PC-3 (cell line): ENCODE measurements at regions of chr5 and their contacts with region 1.

Region 1: DNA sequence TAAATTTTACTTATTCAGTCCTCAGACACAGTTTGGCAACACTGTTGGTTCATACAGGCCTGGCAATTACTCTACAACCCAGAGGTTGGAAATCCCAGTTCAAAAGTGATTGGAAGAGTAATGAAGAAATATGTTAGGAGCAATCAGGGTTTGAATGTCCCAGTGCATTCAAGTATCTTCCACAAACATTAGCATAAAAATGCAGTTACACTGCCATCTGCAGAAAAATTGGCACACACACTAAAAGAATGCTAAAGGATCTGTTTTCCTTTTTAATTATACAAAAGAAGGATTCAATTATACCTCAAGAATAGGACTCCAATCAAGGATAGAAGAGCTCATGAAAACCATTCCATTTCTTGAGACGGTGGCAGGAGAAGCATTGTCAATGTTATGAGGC is 130.2 kb downstream of the DNAH5 start:
- DNase-seq: peak; percentile 75
- ATAC-seq: peak; percentile 70
- H3K4me3 ChIP-seq: no peak overlapping the region
- H3K27ac ChIP-seq: no peak overlapping the region
- H3K4me1 ChIP-seq: peaks cover 7% of the 10 kb centered on the region; the same call in 1 of the 2 replicates
- H3K27me3 ChIP-seq: no peaks in the 10 kb centered on the region
- CTCF ChIP-seq: peak; percentile 78

Region 2: DNA sequence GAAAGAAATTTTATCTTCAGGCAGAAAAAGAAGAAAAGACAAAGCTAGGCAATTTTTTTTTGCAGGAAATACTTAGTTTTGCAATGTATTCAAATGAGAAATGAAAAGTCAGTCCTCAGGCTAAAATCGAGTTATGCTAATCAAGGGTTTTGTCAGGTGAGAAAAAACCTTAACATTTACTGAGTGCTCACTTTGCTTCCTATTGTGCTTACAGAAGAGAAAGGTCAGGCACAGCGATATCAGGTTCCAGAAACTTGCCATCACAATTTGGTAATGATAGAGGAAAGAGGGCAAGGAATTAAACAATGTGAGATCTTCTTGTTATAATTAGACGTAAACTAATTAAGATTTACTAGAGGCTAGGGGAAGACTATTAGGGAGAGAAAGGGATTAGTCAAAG is 1478.4 kb before region 1 on chr5:
- CTCF ChIA-PET with region 1: interaction called, 11 read pairs
- POLR2A ChIA-PET with region 1: no interaction called
- intact Hi-C with region 1: no loop called
- DNase-seq: no peak
- ATAC-seq: no peak
- H3K4me3 ChIP-seq: no peak overlapping the region
- H3K27ac ChIP-seq: no peak overlapping the region
- H3K4me1 ChIP-seq: no peaks in the 10 kb centered on the region
- H3K27me3 ChIP-seq: no peaks in the 10 kb centered on the region
- CTCF ChIP-seq: no peak

Region 3: GRCh38 chr5:13606034-13606620 is 208.2 kb before region 1 on chr5:
- CTCF ChIA-PET with region 1: no interaction called
- POLR2A ChIA-PET with region 1: no interaction called
- intact Hi-C with region 1: loop called (anchors 5 kb)
- DNase-seq: peak; percentile 97
- ATAC-seq: peak; percentile 98
- H3K4me3 ChIP-seq: no peak overlapping the region
- H3K27ac ChIP-seq: peak overlapping the region; percentile 83
- H3K4me1 ChIP-seq: peaks cover 23% of the 10 kb centered on the region
- H3K27me3 ChIP-seq: no peaks in the 10 kb centered on the region
- CTCF ChIP-seq: no peak

Region 4: DNA sequence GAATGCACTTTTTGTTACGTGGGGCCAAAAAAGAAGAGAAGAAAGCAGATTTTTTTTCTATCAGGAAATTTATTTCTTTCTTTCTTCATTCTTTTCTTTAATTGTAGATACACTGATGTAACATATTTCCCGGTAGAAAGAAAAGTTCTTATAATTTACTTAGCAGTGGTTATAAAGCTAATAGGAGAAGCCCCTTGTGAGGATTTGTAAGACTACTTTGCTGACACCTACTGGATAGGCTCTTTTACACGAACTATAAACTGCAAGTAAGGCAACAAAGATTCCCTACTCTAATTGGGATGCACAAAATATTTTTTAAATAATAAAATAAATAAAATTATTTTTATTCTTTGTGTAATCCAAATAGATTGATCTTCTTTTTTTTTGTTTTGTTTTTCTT is 154.2 kb before region 1 on chr5:
- CTCF ChIA-PET with region 1: no interaction called
- POLR2A ChIA-PET with region 1: no interaction called
- intact Hi-C with region 1: loop called (anchors 2 kb)
- DNase-seq: peak; percentile 53
- ATAC-seq: no peak
- H3K4me3 ChIP-seq: no peak overlapping the region
- H3K27ac ChIP-seq: no peak overlapping the region
- H3K4me1 ChIP-seq: peaks cover 19% of the 10 kb centered on the region
- H3K27me3 ChIP-seq: no peaks in the 10 kb centered on the region
- CTCF ChIP-seq: peak; percentile 57

Region 5: GRCh38 chr5:13731121-13731628 is 83.1 kb before region 1 on chr5:
- CTCF ChIA-PET with region 1: no interaction called
- POLR2A ChIA-PET with region 1: no interaction called
- intact Hi-C with region 1: loop called (anchors 1 kb)
- DNase-seq: peak; percentile 97
- ATAC-seq: peak; percentile 98
- H3K4me3 ChIP-seq: no peak overlapping the region
- H3K27ac ChIP-seq: peak overlapping the region; percentile 92
- H3K4me1 ChIP-seq: peaks cover 19% of the 10 kb centered on the region
- H3K27me3 ChIP-seq: no peaks in the 10 kb centered on the region
- CTCF ChIP-seq: no peak

Region 6: DNA sequence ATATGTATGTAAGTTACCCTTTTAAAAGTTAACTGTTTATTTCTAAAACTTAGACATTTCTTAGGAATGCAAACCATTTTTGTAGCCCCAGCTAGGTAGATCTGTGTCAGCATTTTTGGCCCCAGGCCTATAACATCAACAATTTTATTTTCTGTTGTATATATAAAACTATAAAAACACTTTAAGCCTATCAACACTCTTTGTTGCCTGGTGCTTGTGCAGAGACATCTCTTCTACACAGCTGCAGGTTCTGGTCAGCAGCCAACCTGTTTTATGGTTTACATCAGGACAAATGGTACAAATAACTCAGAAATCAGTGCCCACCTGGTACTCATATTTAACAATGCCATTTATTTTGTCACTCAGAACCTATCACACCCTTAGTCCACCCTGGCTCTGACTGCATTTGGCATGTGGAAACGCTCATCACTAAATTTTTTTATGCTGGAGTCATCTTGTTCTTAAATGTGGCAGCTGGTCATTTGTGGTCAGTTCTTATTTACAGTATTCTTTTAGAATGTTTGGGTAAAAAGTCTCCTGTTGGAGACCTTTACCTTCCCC is 43.2 kb before region 1 on chr5:
- CTCF ChIA-PET with region 1: no interaction called
- POLR2A ChIA-PET with region 1: no interaction called
- intact Hi-C with region 1: no loop called
- DNase-seq: peak; percentile 66
- ATAC-seq: peak; percentile 83
- H3K4me3 ChIP-seq: no peak overlapping the region
- H3K27ac ChIP-seq: 0 out of 2 replicates have a peak overlapping the region, but pooled peaks have one; percentile 1
- H3K4me1 ChIP-seq: peaks cover 19% of the 10 kb centered on the region
- H3K27me3 ChIP-seq: no peaks in the 10 kb centered on the region
- CTCF ChIP-seq: no peak

Region 7: DNA sequence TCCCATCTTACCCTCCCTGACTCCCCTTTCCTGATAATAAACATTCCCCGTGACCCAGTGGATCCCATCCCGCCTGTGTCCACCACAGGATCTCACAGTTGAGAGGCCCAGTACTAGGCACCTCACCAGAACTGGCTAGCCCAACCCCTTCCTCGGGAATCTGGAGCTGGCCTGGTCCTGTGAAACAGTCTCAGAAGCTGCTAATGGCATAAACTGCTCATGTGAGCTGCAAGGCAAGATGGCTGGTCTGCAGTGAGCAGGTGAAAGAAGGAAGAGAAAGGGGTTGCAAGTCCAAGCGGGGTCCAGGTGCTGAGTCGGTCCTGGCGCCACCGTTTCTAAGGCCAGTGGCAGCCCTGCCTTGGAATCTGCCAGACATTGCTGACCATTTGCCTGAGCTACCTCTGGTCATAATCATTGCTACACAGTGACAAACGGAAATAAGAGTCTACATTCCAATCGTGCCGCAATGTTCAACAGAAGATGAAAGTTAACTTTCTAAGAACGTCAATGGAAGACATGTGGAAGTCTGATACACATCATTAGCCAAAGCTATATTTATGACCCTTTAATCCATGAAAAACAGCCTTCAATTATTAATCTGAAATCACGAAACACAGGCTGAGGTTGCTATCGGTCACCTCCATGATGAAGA is 96.5 kb after region 1 on chr5:
- CTCF ChIA-PET with region 1: no interaction called
- POLR2A ChIA-PET with region 1: no interaction called
- intact Hi-C with region 1: no loop called
- DNase-seq: no peak
- ATAC-seq: no peak
- H3K4me3 ChIP-seq: no peak overlapping the region
- H3K27ac ChIP-seq: no peak overlapping the region
- H3K4me1 ChIP-seq: no peaks in the 10 kb centered on the region
- H3K27me3 ChIP-seq: no peaks in the 10 kb centered on the region
- CTCF ChIP-seq: no peak